AG04450 (cell line): ENCODE measurements at regions of chr12 and their contacts with region 1.

Region 1: DNA sequence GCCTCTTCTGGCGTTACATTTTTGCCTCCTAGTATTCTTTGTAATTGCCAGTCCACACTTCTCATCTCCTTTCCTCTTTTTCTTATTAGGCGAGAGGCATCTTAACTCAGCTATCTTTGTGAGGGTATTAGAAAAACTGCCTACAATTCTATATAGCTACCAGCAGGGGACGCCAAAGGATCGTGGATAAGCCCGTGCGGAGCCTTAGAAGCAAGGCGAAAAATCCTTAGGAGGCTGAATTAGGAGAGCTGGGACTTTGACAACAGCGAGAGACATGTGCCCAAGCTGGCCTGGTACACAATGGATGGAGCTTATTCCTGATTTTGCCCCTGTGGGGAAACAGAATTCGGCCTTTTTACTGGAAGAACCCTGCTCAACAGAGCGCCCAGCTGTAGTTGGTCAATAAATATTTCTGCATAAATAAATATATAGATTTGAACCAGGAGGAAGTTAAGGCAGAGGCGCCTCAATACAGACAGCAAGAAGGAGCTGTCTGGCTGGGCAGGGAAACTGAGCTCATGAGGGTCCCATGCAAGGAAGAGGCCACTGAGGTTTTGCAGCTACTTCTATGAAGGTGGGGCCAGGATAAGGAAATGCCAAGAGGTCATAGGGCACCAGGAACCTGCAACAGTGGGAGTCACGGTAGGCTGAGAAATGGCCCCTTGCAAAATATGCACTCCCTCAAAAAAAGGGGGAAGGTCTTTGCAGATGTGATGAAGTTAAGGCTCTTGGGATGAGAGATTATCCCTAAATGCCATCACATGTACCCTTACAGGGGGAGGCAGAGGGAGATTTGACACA is 14.6 kb upstream of the RBM19 start:
- DNase-seq: peak; percentile 47
- H3K4me3 ChIP-seq: no peak overlapping the region
- H3K27ac ChIP-seq: no peak overlapping the region
- H3K27me3 ChIP-seq: peaks cover 12% of the 10 kb centered on the region
- CTCF ChIP-seq: peak; percentile 100

Region 2: DNA sequence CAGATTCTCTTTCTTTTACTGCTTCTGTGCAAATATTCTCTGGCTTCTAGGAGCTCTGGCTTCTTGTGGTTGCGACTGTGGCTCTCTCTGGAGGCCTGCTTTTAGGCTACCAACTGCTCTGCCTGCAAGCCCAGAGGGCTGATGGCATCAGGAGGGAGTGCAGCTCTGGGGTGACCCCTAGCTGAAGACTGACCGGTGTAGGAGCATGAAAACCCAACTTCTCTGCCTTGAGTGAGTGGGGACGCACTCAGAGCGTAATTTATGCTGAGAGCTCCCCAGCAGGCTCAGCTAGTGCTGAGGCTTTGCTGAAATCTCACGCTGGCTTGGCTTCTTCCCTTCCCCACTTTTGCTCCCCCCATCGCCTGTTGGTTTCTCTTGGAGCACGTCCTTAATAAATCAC is 15.3 kb after region 1 on chr12:
- CTCF ChIA-PET with region 1: interaction called, 19 read pairs
- POLR2A ChIA-PET with region 1: no interaction called
- DNase-seq: no peak
- H3K4me3 ChIP-seq: no peak overlapping the region
- H3K27ac ChIP-seq: no peak overlapping the region
- H3K27me3 ChIP-seq: peaks cover 7% of the 10 kb centered on the region
- CTCF ChIP-seq: no peak

Region 3: GRCh38 chr12:114476159-114476558 is 495.4 kb after region 1 on chr12:
- CTCF ChIA-PET with region 1: interaction called, 31 read pairs
- POLR2A ChIA-PET with region 1: no interaction called
- DNase-seq: peak; percentile 11
- H3K4me3 ChIP-seq: no peak overlapping the region
- H3K27ac ChIP-seq: no peak overlapping the region
- H3K27me3 ChIP-seq: peaks cover 48% of the 10 kb centered on the region
- CTCF ChIP-seq: peak; percentile 63

Region 4: GRCh38 chr12:114508529-114509129 is 527.9 kb after region 1 on chr12:
- CTCF ChIA-PET with region 1: interaction called, 176 read pairs
- POLR2A ChIA-PET with region 1: no interaction called
- DNase-seq: peak; percentile 59
- H3K4me3 ChIP-seq: no peak overlapping the region
- H3K27ac ChIP-seq: no peak overlapping the region
- H3K27me3 ChIP-seq: peaks cover 3% of the 10 kb centered on the region
- CTCF ChIP-seq: peak; percentile 82

Region 5: DNA sequence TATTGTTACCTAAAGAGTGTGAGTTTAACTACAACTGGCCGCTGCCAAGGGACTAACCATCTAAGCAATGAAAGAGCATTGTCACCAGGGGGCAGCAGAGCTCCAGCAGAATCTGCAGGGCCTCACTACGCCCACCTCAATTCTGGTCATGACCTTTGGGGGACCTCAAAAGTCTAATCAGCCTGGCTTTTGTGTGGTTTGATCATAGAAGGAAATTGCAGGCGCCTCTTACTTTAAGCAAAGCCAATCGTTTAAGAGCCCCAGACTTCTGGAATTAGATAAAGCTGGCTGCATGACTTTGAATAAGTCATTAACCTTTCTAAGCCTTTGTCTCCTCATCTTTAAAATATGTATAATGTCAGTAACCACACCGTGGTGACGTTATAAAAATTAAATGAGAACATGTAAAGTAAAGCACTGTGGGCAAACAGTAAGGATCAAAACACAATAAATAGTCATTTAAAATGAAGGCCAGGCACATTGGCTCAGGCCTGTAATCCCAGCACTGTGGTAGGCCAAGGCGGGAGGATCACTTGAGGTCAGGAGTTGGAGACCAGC is 644.6 kb after region 1 on chr12:
- CTCF ChIA-PET with region 1: interaction called, 27 read pairs
- POLR2A ChIA-PET with region 1: no interaction called
- DNase-seq: peak; percentile 42
- H3K4me3 ChIP-seq: no peak overlapping the region
- H3K27ac ChIP-seq: no peak overlapping the region
- H3K27me3 ChIP-seq: peaks cover under 1% of the 10 kb centered on the region
- CTCF ChIP-seq: peak; percentile 92

Region 6: GRCh38 chr12:114655934-114656749 is 675.4 kb after region 1 on chr12:
- CTCF ChIA-PET with region 1: interaction called, 12 read pairs
- POLR2A ChIA-PET with region 1: no interaction called
- DNase-seq: peak; percentile 78
- H3K4me3 ChIP-seq: no peak overlapping the region
- H3K27ac ChIP-seq: peak overlapping the region; percentile 54
- H3K27me3 ChIP-seq: no peaks in the 10 kb centered on the region
- CTCF ChIP-seq: no peak